ENCODE measurements at regions of chr4 and their contacts with region 1.

Region 1: DNA sequence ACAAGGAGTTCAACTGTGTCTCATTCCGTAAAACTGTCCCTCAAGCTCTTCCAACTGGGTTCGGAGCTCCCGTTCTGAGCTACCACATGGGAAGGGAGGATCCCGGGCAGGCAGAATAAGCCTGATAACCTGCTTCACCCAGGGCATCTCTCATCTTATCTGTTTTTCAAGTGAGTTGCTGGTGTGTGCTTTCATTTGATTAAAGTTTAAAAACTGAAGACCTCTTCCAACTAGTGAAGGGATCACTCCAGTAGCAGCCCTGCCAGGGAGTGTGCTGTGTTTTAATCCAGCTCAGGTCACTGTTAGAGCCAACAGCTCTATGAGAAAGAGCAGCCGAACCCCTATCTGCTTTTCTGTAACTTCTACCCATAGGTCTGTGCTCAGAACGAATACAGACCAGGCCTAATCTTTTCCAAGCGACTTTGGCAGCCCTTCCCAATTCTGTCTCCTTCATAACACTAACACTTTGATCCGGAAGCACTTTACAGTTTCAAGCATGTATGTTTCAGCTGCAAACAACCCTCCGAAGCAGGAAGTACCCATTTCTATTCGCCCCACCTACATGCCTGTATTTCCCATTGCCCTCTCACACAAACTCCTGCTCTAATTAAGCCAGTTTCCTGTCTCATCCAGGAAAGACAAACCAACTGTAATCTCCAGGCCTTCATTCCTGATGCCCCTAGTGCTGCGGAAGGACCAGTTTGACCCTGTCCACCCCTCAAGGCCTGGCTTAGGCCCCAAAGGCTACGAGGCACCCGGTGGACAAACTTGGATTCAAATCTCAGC is 60.9 kb downstream of the IRF2 start:
- DNase-seq: no peak
- ATAC-seq: no peak
- H3K4me3 ChIP-seq: no peak overlapping the region
- H3K27ac ChIP-seq: no peak overlapping the region
- H3K4me1 ChIP-seq: peaks cover 14% of the 10 kb centered on the region
- H3K27me3 ChIP-seq: no peaks in the 10 kb centered on the region
- CTCF ChIP-seq: no peak
- POLR2A ChIP-seq: no peak
- RAD21 ChIP-seq: no peak

Region 2: GRCh38 chr4:184432127-184432922 is 18.9 kb after region 1 on chr4:
- CTCF ChIA-PET with region 1: no interaction called
- POLR2A ChIA-PET with region 1: no interaction called
- dilution Hi-C with region 1: no loop called
- in situ Hi-C with region 1: no loop called
- intact Hi-C with region 1: loop called (anchors 1 kb)
- DNase-seq: no peak
- ATAC-seq: no peak
- H3K4me3 ChIP-seq: no peak overlapping the region
- H3K27ac ChIP-seq: no peak overlapping the region
- H3K4me1 ChIP-seq: no peaks in the 10 kb centered on the region; the same call in 1 of the 2 replicates
- H3K27me3 ChIP-seq: no peaks in the 10 kb centered on the region
- CTCF ChIP-seq: no peak
- POLR2A ChIP-seq: no peak
- RAD21 ChIP-seq: no peak